SK-N-SH (cell line): ENCODE measurements at regions of chr3 and their contacts with region 1.

Region 1: GRCh38 chr3:154252759-154253638 is 71.3 kb downstream of the DHX36 start:
- DNase-seq: peak; percentile 76
- H3K4me3 ChIP-seq: peak overlapping the region in 1 of 2 experiments; percentile 30; a peak in 1 of 4 replicates
- H3K27ac ChIP-seq: no peak overlapping the region
- H3K4me1 ChIP-seq: peaks cover 0 to 4% of the 10 kb centered on the region in 2 experiments; a peak in 3 of 4 replicates
- H3K27me3 ChIP-seq: no peaks in the 10 kb centered on the region
- CTCF ChIP-seq: peak; percentile 91
- EP300 ChIP-seq: no peak
- RAD21 ChIP-seq: peak; percentile 93

Region 2: GRCh38 chr3:153866901-153867300 is 386.1 kb before region 1 on chr3:
- CTCF ChIA-PET with region 1: no interaction called
- POLR2A ChIA-PET with region 1: no interaction called
- DNase-seq: no peak
- H3K4me3 ChIP-seq: no peak overlapping the region
- H3K27ac ChIP-seq: no peak overlapping the region
- H3K4me1 ChIP-seq: peaks cover 0 to 4% of the 10 kb centered on the region in 2 experiments; a peak in 2 of 4 replicates
- H3K27me3 ChIP-seq: no peaks in the 10 kb centered on the region
- CTCF ChIP-seq: no peak
- EP300 ChIP-seq: no peak
- RAD21 ChIP-seq: no peak

Region 3: DNA sequence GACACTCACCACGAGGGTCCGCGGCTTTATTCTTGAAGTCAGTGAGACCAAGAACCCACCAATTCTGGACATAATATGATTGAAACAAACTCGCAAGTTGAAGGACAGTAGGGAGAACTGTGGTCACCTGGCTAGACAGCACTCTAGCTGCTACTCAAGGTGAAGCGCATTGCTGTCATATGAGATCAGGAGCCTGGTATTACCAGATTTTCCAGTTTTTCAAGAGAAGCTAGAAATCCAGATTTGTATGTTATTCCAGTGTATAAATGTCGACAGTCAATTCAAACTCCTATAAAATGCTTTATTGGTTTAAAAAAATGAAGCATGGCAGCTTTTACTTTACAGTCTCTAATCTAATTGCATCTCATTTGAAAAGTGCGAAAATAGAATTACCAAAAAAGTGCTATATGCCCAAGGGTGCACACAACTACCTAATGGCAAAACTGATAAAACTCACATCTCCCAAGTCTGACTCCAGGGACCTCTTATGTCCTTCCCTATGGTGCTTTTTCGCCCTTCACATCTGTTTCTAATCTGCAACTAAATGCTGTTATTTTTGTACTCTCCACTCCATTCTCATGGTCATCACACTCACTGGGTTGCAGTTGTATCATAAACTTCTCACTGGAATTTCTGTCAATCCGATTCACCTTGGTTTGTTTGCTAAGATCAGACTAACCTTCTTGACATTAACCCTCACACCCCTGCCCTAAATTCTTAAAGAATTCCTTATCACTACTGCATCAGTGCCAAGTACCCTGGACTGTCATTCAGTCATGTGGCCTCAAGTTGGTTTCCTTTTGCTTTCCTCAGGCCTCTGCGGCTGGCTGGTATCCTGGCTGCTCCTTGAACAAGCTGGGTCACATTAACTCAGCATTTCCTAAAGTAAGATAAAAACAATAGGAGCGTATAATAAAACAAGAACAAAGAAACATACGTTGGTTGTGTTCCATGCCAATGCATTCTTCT is 163.3 kb before region 1 on chr3:
- CTCF ChIA-PET with region 1: interaction called, 40 read pairs
- POLR2A ChIA-PET with region 1: no interaction called
- DNase-seq: peak; percentile 44
- H3K4me3 ChIP-seq: no peak overlapping the region
- H3K27ac ChIP-seq: no peak overlapping the region
- H3K4me1 ChIP-seq: peaks cover 0 to 3% of the 10 kb centered on the region in 2 experiments; a peak in 1 of 4 replicates
- H3K27me3 ChIP-seq: no peaks in the 10 kb centered on the region
- CTCF ChIP-seq: no peak
- EP300 ChIP-seq: no peak
- RAD21 ChIP-seq: no peak

Region 4: DNA sequence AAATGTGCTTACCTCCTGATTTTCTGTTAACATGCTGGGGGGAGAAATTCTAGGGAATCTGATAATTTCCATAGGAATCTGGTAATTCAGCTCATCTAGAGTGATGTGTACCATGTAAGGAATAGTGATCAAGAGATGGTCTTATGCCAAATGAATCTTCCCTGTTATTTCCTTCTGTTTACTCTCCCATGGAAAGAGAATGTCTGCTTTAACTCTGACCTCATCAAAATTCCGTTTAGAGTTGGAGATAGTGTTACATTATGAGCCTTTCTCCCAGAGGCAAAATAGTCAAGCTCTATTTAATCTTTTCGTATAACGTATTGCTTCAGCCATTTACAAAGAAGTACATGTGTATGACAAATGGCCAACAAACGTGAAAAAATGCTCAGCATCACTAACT is 55.2 kb before region 1 on chr3:
- CTCF ChIA-PET with region 1: no interaction called
- POLR2A ChIA-PET with region 1: no interaction called
- DNase-seq: no peak
- H3K4me3 ChIP-seq: no peak overlapping the region
- H3K27ac ChIP-seq: no peak overlapping the region
- H3K4me1 ChIP-seq: no peaks in the 10 kb centered on the region; a peak in 1 of 4 replicates
- H3K27me3 ChIP-seq: no peaks in the 10 kb centered on the region
- CTCF ChIP-seq: no peak
- EP300 ChIP-seq: no peak
- RAD21 ChIP-seq: no peak

Region 5: GRCh38 chr3:154224366-154225265 is 28.4 kb before region 1 on chr3:
- CTCF ChIA-PET with region 1: interaction called, 13 read pairs
- POLR2A ChIA-PET with region 1: no interaction called
- DNase-seq: no peak
- H3K4me3 ChIP-seq: no peak overlapping the region
- H3K27ac ChIP-seq: no peak overlapping the region
- H3K4me1 ChIP-seq: no peaks in the 10 kb centered on the region
- H3K27me3 ChIP-seq: no peaks in the 10 kb centered on the region
- CTCF ChIP-seq: no peak
- EP300 ChIP-seq: no peak
- RAD21 ChIP-seq: no peak

Region 6: DNA sequence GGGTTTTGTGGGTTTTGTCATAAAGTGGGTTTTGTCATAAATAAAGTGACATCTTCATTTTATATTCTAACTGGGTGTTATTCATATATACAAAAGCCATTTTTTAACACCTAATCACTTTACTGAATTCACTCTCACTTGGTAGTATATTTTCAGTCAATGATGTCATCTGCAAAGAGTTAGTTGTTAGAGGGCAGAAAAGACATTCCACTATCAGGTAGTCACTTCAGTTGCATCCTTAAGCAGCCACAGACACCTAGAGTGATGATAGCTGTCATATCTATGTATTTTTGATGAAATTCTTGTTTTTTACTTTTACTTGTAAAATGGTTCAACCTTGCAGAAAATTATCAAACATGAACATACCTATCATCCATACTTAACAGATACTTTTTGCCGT is 17.7 kb before region 1 on chr3:
- CTCF ChIA-PET with region 1: interaction called, 11 read pairs
- POLR2A ChIA-PET with region 1: no interaction called
- DNase-seq: no peak
- H3K4me3 ChIP-seq: no peak overlapping the region
- H3K27ac ChIP-seq: no peak overlapping the region
- H3K4me1 ChIP-seq: no peaks in the 10 kb centered on the region
- H3K27me3 ChIP-seq: no peaks in the 10 kb centered on the region
- CTCF ChIP-seq: no peak
- EP300 ChIP-seq: no peak
- RAD21 ChIP-seq: no peak

Region 7: GRCh38 chr3:154464440-154465190 is 211.6 kb after region 1 on chr3:
- CTCF ChIA-PET with region 1: no interaction called
- POLR2A ChIA-PET with region 1: no interaction called
- DNase-seq: no peak
- H3K4me3 ChIP-seq: no peak overlapping the region
- H3K27ac ChIP-seq: no peak overlapping the region
- H3K4me1 ChIP-seq: no peaks in the 10 kb centered on the region
- H3K27me3 ChIP-seq: no peaks in the 10 kb centered on the region
- CTCF ChIP-seq: no peak
- EP300 ChIP-seq: no peak
- RAD21 ChIP-seq: no peak